ENCODE measurements at regions of chr11 and their contacts with region 1.

Region 1: DNA sequence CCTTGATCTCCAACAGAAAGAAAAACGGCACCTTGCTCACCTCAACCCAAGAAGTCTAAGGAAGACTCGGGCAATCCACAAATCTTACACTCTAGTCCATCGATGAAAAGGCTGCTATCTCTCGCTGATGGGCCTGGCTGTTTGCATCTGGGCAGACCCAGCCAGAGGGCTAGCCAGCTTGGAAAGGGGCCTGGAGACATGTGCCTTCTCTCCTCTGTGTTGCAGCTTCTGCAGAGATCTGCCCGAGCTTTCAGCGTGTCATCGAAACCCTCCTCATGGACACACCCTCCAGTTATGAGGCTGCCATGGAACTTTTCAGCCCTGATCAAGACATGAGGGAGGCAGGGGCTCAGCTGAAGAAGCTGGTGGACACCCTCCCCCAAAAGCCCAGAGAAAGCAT is 3.2 kb downstream of the SCGB1A1 start:
- DNase-seq: peak in 1 of 2 donors; percentile 57
- H3K4me3 ChIP-seq: no peak overlapping the region
- H3K27ac ChIP-seq: no peak overlapping the region
- H3K4me1 ChIP-seq: peaks cover 0 to 15% (median 7%) of the 10 kb centered on the region in 4 donors
- H3K27me3 ChIP-seq: no peaks in the 10 kb centered on the region
- CTCF ChIP-seq: no peak

Region 2: GRCh38 chr11:62143727-62144126 is 278.3 kb before region 1 on chr11:
- intact Hi-C with region 1: no loop called
- DNase-seq: peak in 1 of 2 donors; percentile 54
- H3K4me3 ChIP-seq: no peak overlapping the region
- H3K27ac ChIP-seq: no peak overlapping the region
- H3K4me1 ChIP-seq: no peaks in the 10 kb centered on the region
- H3K27me3 ChIP-seq: no peaks in the 10 kb centered on the region
- CTCF ChIP-seq: no peak

Region 3: DNA sequence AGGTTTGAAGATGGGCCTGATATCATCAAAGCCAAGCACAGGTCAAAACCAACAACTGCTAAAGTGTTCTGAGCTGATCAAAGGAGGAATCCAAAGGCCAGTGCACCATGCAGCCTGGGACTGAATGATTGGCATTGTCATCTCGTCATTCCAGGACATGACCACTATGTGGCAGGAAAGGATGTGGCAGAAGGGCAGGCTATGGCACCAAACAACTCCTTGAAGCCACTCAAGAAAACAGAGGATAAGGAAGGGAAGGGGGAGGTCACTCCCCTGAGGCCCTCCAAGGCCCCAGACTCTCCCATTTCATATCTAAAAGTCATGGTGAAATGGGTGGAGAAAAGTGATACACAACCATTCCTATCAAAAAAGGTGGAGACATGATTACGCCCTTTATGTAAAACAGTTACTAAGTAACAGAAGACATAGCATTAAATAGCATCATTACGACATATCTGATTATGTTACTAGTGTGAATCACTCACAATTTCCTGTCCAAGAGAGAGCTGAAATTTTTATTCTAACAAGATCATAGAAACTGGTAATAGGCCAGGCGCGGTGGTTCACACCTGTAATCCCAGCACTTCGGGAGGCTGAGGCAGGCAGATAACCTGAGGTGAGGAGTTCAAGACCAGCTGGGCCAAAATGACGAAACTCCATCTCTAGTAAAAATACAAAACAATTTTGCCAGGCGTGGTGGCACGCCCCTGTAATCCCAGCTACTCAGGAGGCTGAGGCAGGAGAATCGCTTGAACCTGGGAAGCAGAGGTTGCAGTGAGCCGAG is 75.3 kb after region 1 on chr11:
- intact Hi-C with region 1: no loop called
- DNase-seq: peak in 1 of 2 donors; percentile 37
- H3K4me3 ChIP-seq: no peak overlapping the region
- H3K27ac ChIP-seq: no peak overlapping the region
- H3K4me1 ChIP-seq: peaks cover 0 to 25% (median 16%) of the 10 kb centered on the region in 4 donors
- H3K27me3 ChIP-seq: no peaks in the 10 kb centered on the region
- CTCF ChIP-seq: peak; percentile 28 to 46

Region 4: DNA sequence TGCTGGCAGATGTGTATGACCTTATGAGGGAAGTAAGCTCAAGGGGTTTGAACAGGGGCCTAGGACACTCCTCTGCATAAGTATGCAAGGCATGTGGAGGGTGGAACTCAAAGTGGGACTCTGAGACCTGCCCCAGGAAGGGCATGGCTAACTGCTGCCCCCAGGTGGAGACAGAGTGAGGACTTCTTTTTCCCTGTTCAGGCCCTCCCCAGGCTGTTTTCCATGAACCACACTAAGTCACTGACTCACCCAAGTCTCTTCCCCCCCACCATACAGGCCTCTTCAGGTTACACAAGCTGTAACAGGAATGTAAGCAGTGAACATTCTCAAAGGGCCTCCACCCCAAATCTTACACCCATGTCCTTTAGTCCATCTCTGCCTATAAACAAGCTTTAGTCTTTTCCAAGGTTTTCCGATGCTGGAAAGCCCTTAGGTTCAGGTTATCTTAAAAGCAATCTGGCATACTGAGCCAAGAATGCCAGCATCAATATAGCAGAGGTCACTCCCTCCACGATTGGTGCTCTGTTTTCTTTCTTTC is 138.6 kb after region 1 on chr11:
- intact Hi-C with region 1: loop called (anchors 5 kb)
- DNase-seq: peak; percentile 91 to 96
- H3K4me3 ChIP-seq: no peak overlapping the region
- H3K27ac ChIP-seq: peak overlapping the region; percentile 75 to 78
- H3K4me1 ChIP-seq: peaks cover 4 to 46% (median 31%) of the 10 kb centered on the region in 4 donors
- H3K27me3 ChIP-seq: no peaks in the 10 kb centered on the region
- CTCF ChIP-seq: peak; percentile 86 to 88

Measured in tibial artery (tissue), 4 donors.